ENCODE measurements at regions of chr7 and their contacts with region 1.

Region 1: DNA sequence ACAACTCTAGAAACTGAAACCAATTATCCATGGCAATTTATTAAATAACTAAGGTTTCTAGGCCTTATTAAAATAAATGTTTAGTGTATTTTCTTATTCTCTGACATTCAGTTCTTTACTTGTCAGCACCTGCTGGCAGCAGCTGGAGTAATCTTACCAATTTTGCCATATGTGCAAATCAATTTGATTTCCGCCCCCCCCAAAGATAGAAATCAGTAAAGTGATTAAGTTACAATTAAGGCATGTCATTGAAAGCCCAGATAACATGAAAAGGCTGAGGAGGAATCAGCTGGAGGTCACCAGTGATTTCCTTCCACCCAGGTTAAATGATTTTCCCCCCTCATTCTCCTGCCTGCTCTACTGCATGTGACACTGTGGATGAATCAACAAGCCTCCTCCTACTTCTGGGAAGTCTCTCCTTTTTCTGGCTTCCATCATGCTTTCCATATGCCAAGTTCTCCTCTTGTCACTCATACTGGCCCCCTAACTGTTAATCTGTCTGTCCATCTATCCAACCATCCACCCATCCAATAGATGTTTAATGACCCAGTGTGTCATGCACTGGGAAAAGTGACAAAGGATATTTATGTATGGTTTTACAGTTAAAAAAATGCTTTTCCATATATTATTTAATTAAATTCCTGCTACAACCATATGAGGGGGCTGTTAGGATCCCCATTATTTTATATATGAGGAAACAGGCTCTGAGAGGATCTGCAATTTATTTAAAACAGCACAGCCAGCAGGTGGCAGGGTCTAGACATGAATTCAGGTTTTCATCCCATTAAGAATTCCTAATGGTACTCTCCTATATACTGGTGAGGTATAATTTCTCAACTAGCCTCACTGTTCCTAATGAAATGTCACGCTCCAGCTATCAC is 116.5 kb downstream of the ATXN7L1 start:
- DNase-seq: no peak
- CTCF ChIP-seq: peak; percentile 51

Region 2: DNA sequence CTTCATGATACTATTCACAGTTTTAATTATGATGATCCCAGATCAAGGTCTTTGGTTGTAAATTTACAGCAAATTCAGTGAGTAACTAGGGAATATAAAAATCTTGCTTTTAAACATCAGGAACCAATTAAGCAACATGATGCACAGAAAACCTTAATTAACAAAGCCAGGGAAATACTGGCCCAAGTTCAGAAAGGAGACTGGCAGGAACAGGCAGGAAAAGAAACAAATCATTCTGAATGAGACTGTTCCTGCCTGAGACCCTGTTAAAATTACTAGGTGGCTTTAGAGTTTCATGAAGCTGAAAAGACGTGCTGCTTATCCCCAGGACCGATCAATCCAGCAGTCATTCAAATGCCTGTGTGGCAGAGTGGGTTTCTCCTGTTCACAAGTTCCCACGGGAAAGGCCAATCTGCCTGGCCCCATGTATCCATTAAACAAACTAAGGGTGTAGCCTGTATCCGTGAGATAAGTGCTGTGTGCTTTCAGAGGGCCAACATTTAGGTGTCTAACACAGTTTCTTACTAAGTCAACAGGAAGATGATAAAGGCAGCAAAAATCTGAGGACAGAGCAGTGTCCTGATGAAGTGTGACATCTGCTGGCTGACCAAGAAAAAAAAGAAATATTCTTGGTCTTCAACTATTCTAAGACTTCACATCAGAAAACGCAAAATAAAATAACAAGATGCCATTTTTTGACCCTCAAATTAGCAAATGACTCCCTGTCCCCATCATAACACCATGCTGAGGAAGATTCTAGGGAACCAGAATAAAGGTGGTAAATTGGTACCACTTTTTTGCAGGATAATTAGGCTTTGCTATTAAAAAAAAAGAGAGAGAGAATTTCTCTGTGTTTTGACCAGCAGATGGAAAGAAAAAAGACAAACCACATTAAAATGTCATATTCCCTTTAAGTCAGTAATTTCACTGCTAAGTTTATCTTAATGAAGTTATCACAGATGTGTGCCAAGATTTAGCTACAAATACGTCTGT is 272.0 kb before region 1 on chr7:
- in situ Hi-C with region 1: no loop called
- DNase-seq: peak; percentile 39
- CTCF ChIP-seq: peak; percentile 19

Region 3: GRCh38 chr7:105581066-105581842 is 178.7 kb before region 1 on chr7 and contains the start of gene EFCAB10:
- in situ Hi-C with region 1: no loop called
- DNase-seq: peak; percentile 71
- CTCF ChIP-seq: no peak

Region 4: GRCh38 chr7:106009403-106010226 is 249.7 kb after region 1 on chr7:
- in situ Hi-C with region 1: loop called (anchors 10 kb)
- DNase-seq: peak; percentile 89
- CTCF ChIP-seq: peak; percentile 90

Region 5: GRCh38 chr7:106041140-106041717 is 281.3 kb after region 1 on chr7:
- in situ Hi-C with region 1: loop called (anchors 5 kb)
- DNase-seq: peak; percentile 74
- CTCF ChIP-seq: peak; percentile 46

Region 6: GRCh38 chr7:106153891-106154449 is 394.1 kb after region 1 on chr7:
- in situ Hi-C with region 1: loop called (anchors 25 kb)
- DNase-seq: peak; percentile 78
- CTCF ChIP-seq: peak; percentile 86